Stomach (tissue), 19 donors: ENCODE measurements at regions of chr7 and their contacts with region 1.

Region 1: GRCh38 chr7:108181073-108181985 is 51.2 kb upstream of the LAMB4 start:
- DNase-seq: peak in 1 of 2 donors; percentile 84
- H3K4me3 ChIP-seq: no peak overlapping the region
- H3K27ac ChIP-seq: no peak overlapping the region
- H3K4me1 ChIP-seq: no peaks in the 10 kb centered on the region
- H3K27me3 ChIP-seq: no peaks in the 10 kb centered on the region
- CTCF ChIP-seq: peak in 5 of 7 experiments; percentile 58 to 86 (median 79)
- EP300 ChIP-seq: no peak
- POLR2A ChIP-seq: no peak

Region 2: GRCh38 chr7:108002726-108003598 is 178.4 kb before region 1 on chr7 and contains the start of gene LAMB1:
- intact Hi-C with region 1: no loop called
- DNase-seq: peak; percentile 63 to 91
- H3K4me3 ChIP-seq: peak within 1 kb of the TSS; percentile 62 to 87 (median 75)
- H3K27ac ChIP-seq: peak within 1 kb of the TSS; percentile 77 to 89 (median 86)
- H3K4me1 ChIP-seq: peaks cover 18 to 60% (median 41%) of the 10 kb centered on the region in 4 donors
- H3K27me3 ChIP-seq: peaks cover 0 to 39% (median 11%) of the 10 kb centered on the region in 3 donors
- CTCF ChIP-seq: no peak
- EP300 ChIP-seq: no peak
- POLR2A ChIP-seq: no peak
- total RNA-seq, gene LAMB1: 85.7 to 399 (median 165) TPM

Region 3: DNA sequence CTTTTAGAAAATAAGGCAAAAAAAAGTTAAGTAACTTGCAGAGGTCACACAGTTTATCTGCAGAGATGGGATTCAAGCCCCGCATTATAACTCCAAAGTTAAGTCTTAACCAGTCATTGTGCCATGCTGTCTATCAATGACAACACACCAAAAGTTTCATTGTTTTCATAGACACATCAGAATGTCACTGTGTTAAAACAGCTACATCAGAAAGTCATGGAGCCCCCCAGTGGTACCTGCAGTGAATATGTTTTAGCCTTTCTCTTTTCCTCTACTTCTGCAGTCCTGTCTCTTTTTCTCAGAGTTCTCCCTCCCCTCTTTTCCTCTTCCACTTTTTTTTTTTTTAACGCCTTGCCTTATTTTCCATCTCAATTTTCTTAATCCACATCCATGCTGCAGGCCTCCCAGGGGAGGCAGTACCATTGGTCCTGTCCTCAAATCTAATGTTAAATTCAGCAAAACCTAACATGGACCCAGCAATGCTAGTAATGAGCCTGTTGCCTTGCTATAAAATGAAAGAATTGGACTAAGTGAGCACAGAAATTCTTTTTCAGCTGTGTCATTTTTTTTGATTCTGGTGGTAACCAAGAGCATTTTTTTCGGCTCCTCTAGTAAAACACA is 278.7 kb after region 1 on chr7:
- intact Hi-C with region 1: loop called (anchors 10 kb)
- DNase-seq: peak in 1 of 2 donors; percentile 63
- H3K4me3 ChIP-seq: no peak overlapping the region
- H3K27ac ChIP-seq: no peak overlapping the region
- H3K4me1 ChIP-seq: peaks cover 18 to 23% (median 23%) of the 10 kb centered on the region in 4 donors
- H3K27me3 ChIP-seq: peaks cover 9 to 47% (median 18%) of the 10 kb centered on the region in 3 donors
- CTCF ChIP-seq: peak in 5 of 7 experiments; percentile 20 to 40 (median 32)
- EP300 ChIP-seq: no peak
- POLR2A ChIP-seq: no peak